ENCODE measurements at regions of chr10 and their contacts with region 1.

Region 1: DNA sequence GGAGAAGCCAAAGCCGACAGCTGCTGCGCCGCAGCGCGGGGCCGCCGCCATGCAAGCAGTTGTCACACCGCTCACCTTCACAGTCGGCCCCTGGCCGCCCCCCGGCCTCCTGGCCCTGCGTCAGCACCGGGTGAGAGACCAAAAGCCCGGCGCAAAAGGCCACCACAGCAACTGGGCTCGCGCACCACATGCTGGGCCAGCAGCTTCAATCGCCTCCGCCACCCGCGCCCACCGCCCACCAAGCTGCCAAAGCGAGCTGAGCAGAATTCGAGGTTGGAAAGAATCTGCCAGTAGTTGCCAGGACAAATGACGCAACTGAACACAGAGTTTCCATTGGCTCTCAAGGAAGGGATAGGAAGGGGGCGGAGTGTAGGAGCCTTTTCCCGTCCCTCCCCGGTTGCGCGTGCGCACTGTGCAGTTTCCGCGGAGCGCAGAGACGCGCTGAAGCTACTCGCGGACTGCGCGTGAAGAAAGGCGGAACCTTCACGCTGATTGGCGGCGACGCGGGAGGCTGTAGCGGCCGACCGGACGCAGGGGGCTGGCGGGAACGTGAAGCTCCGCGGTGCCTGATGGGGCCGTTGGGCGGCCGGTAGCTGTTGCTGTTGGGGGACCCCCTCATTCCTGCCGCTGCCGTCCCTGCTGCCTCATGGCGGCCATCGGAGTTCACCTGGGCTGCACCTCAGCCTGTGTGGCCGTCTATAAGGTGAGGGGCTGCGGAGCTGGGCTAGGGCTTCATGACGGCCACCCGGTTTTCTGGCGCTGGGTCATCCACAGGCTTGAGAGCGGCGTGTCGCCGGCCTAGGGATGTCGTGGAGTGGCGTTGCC is at the starts of genes CDNF, HSPA14 and MSANTD7:
- H3K4me3 ChIP-seq: peak within 1 kb of the TSS; percentile 94
- H3K27ac ChIP-seq: peak within 1 kb of the TSS; percentile 88
- H3K4me1 ChIP-seq: peaks cover 5% of the 10 kb centered on the region; the same call in 1 of the 2 replicates
- CTCF ChIP-seq: no peak

Region 2: DNA sequence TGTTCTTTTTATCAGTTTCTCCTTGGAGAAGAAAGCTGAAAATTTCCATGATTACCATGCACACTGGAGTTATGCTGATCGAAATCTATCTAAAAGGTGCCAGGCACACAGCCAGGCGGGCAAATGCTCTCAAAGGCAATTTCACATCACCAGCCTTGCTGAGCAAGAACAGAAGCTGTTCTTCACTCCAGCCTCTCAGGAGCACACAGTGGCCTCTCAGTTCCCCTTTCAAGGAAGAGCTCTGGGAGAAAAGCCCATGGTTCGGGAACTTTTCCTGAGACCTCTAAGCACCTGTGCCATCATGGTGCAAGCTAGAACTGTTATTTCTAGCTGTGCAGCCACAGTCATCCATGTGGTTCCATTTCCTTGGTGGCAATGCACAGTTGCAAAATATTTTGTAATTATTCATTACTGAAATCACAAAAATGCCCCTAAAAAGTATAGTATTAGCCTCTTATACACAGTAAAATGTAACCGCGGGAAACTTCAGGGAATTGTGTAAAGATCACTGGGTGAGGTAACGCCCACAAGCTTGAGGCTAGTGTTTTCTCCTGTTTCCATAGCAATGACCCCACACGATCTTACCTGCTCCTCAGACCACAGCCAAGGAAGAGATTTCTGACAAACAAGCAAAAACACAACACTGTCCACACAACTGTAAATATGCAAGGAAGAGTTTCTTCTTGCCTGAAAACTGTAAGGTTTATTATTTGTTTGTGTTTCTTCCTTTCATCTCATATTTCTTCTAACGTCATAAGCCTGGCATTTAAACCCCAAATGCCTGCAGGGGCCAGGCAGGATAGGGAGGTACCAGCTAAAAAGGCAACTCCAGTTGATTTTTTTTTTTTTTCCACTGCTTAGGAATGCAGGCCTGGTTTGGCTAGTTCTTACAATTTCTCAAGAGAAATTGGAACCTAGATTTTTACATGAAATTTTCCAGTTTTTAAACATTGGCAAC is 184.4 kb before region 1 on chr10:
- CTCF ChIA-PET with region 1: no interaction called
- POLR2A ChIA-PET with region 1: no interaction called
- H3K4me3 ChIP-seq: no peak overlapping the region
- H3K27ac ChIP-seq: no peak overlapping the region
- H3K4me1 ChIP-seq: peaks cover 11% of the 10 kb centered on the region
- CTCF ChIP-seq: no peak

Region 3: GRCh38 chr10:14822879-14823755 is 14.9 kb before region 1 on chr10:
- CTCF ChIA-PET with region 1: interaction called, 4 read pairs
- POLR2A ChIA-PET with region 1: interaction called, 10 read pairs
- H3K4me3 ChIP-seq: no peak overlapping the region
- H3K27ac ChIP-seq: no peak overlapping the region
- H3K4me1 ChIP-seq: no peaks in the 10 kb centered on the region
- CTCF ChIP-seq: no peak; the same call in 1 of the 2 replicates

Region 4: GRCh38 chr10:14878266-14879054 is 40.5 kb after region 1 on chr10 and contains the start of gene SUV39H2:
- CTCF ChIA-PET with region 1: interaction called, 3 read pairs
- POLR2A ChIA-PET with region 1: interaction called, 68 read pairs
- H3K4me3 ChIP-seq: peak within 1 kb of the TSS; percentile 82
- H3K27ac ChIP-seq: peak within 1 kb of the TSS; percentile 93
- H3K4me1 ChIP-seq: no peaks in the 10 kb centered on the region
- CTCF ChIP-seq: no peak

Region 5: GRCh38 chr10:14954001-14954770 is 116.2 kb after region 1 on chr10 and contains the start of gene DCLRE1C:
- CTCF ChIA-PET with region 1: interaction called, 5 read pairs
- POLR2A ChIA-PET with region 1: interaction called, 19 read pairs
- H3K4me3 ChIP-seq: peak within 1 kb of the TSS; percentile 80
- H3K27ac ChIP-seq: peak within 1 kb of the TSS; percentile 48; the same call in 1 of the 2 replicates
- H3K4me1 ChIP-seq: 0 out of 2 replicates have a peak, but pooled peaks cover 2% of the 10 kb centered on the region
- CTCF ChIP-seq: no peak

Region 6: DNA sequence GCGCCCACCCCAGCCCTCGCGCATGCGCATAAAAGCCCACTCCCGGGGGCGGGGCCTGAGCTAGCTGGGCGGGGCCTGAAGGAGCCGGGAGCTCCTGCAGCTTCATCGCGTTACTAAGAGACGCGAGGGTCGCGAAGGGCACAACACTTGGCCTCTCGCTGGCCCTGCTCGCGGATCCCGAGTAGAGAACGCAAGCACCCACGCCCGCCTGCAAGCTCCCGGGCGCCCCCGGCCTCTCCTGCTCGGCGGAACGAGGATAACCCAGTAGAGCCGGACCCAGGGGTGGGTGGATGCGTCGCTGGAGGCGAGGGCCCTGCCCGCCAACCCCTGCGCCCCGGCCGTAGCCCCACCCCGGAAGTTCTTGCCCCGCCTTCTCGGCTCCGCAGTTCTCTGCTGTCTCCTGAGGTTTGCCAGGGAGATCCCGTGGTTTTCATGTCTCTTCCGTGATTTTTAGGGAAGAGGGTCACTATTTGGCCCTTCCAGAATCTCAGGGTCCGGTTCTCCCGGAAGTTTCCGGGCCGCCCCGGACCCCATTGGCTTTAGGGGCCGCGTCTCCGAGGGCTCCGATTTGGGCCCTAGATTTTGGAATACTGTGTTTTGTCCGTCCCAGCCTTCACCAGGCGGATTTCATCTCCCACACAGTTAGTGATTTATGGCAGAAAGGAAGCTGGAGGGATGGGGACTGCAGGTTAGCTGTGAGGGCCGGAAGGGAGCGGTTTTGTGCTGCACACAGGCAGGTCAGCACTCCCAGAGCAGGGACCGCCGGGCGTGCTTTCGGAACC is 121.5 kb after region 1 on chr10 and contains the start of gene MEIG1:
- CTCF ChIA-PET with region 1: no interaction called
- POLR2A ChIA-PET with region 1: interaction called, 19 read pairs
- H3K4me3 ChIP-seq: peak within 1 kb of the TSS; percentile 74
- H3K27ac ChIP-seq: peak within 1 kb of the TSS; percentile 90
- H3K4me1 ChIP-seq: no peaks in the 10 kb centered on the region
- CTCF ChIP-seq: no peak

Region 7: DNA sequence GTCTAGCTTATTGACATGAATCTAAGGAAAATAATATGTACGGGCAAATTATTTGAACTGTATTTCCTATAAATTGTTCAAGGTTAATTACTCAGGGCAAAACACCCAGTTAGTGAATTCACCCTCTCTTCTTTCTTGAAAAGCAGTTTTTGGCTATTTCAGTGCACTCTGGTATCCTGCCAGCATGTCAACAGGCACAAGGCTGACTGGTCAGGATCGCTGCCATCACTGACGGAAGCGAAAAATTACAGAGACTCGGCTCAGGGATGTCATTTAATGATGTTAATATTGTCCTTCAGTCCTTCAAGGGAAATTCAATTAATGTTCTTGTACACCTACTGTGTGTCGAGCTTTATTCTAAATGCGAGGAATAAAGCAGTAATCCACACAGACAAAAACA is 177.5 kb after region 1 on chr10:
- CTCF ChIA-PET with region 1: no interaction called
- POLR2A ChIA-PET with region 1: no interaction called
- H3K4me3 ChIP-seq: no peak overlapping the region
- H3K27ac ChIP-seq: no peak overlapping the region
- H3K4me1 ChIP-seq: no peaks in the 10 kb centered on the region
- CTCF ChIP-seq: no peak

Region 8: GRCh38 chr10:15168781-15169554 is 331.0 kb after region 1 on chr10:
- CTCF ChIA-PET with region 1: no interaction called
- POLR2A ChIA-PET with region 1: interaction called, 11 read pairs
- H3K4me3 ChIP-seq: no peak overlapping the region
- H3K27ac ChIP-seq: no peak overlapping the region; the same call in 1 of the 2 replicates
- H3K4me1 ChIP-seq: peaks cover 17% of the 10 kb centered on the region
- CTCF ChIP-seq: no peak

Measured in HEK293 (cell line).